ENCODE measurements at regions of chr3 and their contacts with region 1.

Region 1: GRCh38 chr3:23202921-23203707 is at the start of gene UBE2E2:
- DNase-seq: peak; percentile 86
- H3K4me3 ChIP-seq: peak within 1 kb of the TSS; percentile 67 to 99 (median 90)
- H3K27ac ChIP-seq: peak within 1 kb of the TSS; percentile 80 to 93 (median 86)
- H3K4me1 ChIP-seq: peaks cover 0 to 45% (median 27%) of the 10 kb centered on the region in 4 donors
- H3K27me3 ChIP-seq: no peaks in the 10 kb centered on the region
- CTCF ChIP-seq: no peak
- EP300 ChIP-seq: no peak
- POLR2A ChIP-seq: no peak
- total RNA-seq, gene UBE2E2: 34.6 to 135 (median 48.8) TPM

Region 2: DNA sequence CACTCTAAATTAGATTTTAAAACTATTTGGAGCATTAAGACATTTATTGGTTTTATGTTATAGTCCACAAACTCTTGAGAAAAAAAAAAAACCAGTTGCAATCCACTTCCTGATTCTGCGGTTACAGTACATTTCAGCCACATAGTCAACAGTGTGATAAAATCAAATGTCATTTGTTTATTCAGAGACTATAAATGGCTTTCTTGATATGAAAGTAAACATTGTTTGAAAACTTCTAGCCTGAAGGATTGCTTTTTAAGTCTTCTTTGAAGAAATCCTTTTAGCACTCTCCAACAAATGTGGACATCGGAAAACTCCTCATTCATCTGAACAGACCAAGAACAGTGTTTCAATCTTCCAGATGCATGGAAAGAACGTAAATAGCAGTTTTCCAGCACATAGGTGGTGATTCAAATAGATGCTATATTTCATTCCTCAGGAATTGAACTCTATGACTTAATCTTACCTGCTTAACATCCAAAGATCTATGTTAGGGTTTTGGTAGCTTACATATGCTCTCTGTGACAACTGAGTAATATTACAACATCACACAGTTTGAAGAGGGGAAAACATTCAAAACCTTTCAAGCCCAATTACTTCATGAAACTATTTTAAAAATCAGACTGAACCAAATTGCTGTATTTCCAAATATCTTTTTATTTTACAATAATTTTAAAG is 87.8 kb before region 1 on chr3:
- intact Hi-C with region 1: loop called (anchors 5 kb)
- DNase-seq: no peak
- H3K4me3 ChIP-seq: no peak overlapping the region
- H3K27ac ChIP-seq: no peak overlapping the region
- H3K4me1 ChIP-seq: peaks cover 0 to 47% (median 42%) of the 10 kb centered on the region in 4 donors
- H3K27me3 ChIP-seq: no peaks in the 10 kb centered on the region
- CTCF ChIP-seq: no peak
- EP300 ChIP-seq: no peak
- POLR2A ChIP-seq: no peak

Region 3: DNA sequence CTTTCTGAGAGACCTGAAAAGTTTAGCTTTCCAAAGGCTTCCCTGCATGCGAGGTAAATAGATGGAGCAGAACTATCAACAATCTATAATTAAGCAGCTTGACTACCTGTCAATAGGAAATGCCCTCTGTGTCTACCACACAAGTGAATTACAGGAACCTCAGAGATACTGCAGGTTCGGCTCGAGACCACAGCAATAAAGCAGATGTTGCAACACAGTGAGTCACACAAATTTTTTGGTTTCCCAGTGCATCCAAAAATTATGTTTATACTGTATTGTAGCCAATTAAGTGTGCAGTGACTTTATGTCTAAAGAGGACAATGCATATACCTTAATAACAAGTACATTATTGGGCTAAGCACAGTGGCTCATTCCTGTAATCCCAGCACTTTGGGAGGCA is 252.0 kb after region 1 on chr3:
- intact Hi-C with region 1: loop called (anchors 10 kb)
- DNase-seq: no peak
- H3K4me3 ChIP-seq: no peak overlapping the region
- H3K27ac ChIP-seq: peak overlapping the region in 1 of 4 donors; percentile 48
- H3K4me1 ChIP-seq: peaks cover 0 to 40% (median 28%) of the 10 kb centered on the region in 4 donors
- H3K27me3 ChIP-seq: no peaks in the 10 kb centered on the region
- CTCF ChIP-seq: no peak
- EP300 ChIP-seq: no peak
- POLR2A ChIP-seq: no peak

Region 4: DNA sequence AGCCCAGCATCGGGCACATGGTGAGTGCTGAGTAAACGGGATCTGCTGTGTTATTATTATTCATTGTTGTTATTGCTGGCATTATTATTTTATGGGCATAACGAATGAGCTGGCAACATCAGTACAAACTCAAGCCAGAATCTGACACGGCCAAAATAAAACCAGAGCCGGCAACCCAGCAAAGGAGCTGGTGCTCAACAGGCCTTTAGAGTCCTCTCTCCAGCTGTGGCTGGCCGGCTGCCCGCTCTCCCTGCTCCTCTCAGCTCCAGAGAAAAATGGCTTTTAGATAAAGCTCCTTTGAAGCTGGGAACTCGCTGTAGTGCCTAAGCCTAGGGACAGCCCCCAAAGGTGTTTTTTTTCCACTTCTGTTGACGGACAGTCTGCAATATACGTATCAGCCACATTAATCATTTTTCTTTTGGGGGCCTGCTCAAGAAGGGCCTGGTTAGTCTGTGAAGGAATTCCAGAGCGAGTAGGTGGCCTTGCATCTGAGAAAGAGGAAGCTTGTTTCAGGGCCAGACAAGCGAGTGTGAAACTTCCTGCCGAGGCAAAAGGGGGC is 408.7 kb after region 1 on chr3:
- intact Hi-C with region 1: loop called (anchors 10 kb)
- DNase-seq: peak; percentile 90
- H3K4me3 ChIP-seq: peak overlapping the region in 2 of 4 donors; percentile 3 to 22
- H3K27ac ChIP-seq: peak overlapping the region in 3 of 4 donors; percentile 45 to 68 (median 61)
- H3K4me1 ChIP-seq: peaks cover 0 to 31% (median 26%) of the 10 kb centered on the region in 4 donors
- H3K27me3 ChIP-seq: no peaks in the 10 kb centered on the region
- CTCF ChIP-seq: no peak
- EP300 ChIP-seq: peak in 1 of 4 donors; percentile 7
- POLR2A ChIP-seq: no peak

Region 5: GRCh38 chr3:23685484-23686258 is 482.6 kb after region 1 on chr3:
- intact Hi-C with region 1: loop called (anchors 10 kb)
- DNase-seq: peak; percentile 91
- H3K4me3 ChIP-seq: no peak overlapping the region
- H3K27ac ChIP-seq: peak overlapping the region in 3 of 4 donors; percentile 8 to 60 (median 55)
- H3K4me1 ChIP-seq: peaks cover 0 to 18% (median 16%) of the 10 kb centered on the region in 4 donors
- H3K27me3 ChIP-seq: no peaks in the 10 kb centered on the region
- CTCF ChIP-seq: no peak
- EP300 ChIP-seq: peak in 1 of 4 donors; percentile 12
- POLR2A ChIP-seq: no peak

Region 6: GRCh38 chr3:23805633-23806533 is 602.8 kb after region 1 on chr3 and contains the start of gene UBE2E1:
- intact Hi-C with region 1: loop called (anchors 2 kb)
- DNase-seq: peak; percentile 87
- H3K4me3 ChIP-seq: peak within 1 kb of the TSS; percentile 77 to 99 (median 94)
- H3K27ac ChIP-seq: peak within 1 kb of the TSS; percentile 92 to 96 (median 94)
- H3K4me1 ChIP-seq: peaks cover 0 to 30% (median 19%) of the 10 kb centered on the region in 4 donors
- H3K27me3 ChIP-seq: no peaks in the 10 kb centered on the region
- CTCF ChIP-seq: no peak
- EP300 ChIP-seq: no peak
- POLR2A ChIP-seq: no peak
- total RNA-seq, gene UBE2E1: 61.4 to 145 (median 104) TPM

Measured in sigmoid colon (tissue), 7 donors.